Caco-2 (cell line): ENCODE measurements at regions of chr11 and their contacts with region 1.

Region 1: GRCh38 chr11:106276859-106277436 is 199.5 kb downstream of the AASDHPPT start:
- DNase-seq: peak; percentile 48 to 49
- H3K4me3 ChIP-seq: no peak overlapping the region
- H3K4me3 Mint-ChIP-seq: no peak overlapping the region
- H3K27ac Mint-ChIP-seq: peak overlapping the region; percentile 46
- H3K4me1 ChIP-seq: peaks cover 14% of the 10 kb centered on the region; the same call in 1 of the 2 replicates
- H3K4me1 Mint-ChIP-seq: peaks cover 20% of the 10 kb centered on the region
- H3K27me3 ChIP-seq: no peaks in the 10 kb centered on the region
- H3K27me3 Mint-ChIP-seq: no peaks in the 10 kb centered on the region
- CTCF ChIP-seq: peak; percentile 46 to 63

Region 2: DNA sequence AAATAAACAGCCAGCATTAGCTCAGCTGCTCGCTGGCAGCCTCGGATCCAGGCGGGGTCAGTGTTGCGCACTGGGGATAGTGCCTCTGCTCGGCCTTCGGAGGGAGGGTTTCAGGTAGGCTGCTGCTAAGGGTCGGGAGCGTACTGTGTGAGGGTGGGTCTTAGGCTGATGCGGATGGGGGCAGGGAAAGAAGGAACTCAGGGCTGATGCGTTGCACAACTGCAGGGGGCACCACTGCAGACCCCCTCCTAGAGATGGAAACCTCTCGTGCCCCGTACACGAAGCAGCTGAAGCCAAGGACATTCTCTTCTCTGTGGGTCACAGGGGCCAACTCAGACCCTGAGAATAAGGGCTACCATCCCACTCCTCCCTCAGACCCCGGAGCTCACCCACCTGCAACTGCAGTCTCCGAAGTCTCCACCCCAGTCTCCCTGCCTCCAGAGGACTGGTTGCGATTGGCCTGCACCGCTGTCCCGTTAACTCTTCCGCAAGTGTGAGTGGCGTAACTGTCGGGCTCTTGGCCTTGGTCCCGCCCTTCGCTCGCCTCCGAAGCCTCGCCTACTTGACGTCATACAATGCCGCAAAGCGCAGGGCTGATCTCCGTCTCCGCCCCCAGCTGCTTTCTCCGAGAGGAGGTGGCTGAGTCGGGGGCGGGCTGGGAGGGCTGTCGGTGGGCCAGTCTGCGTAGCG is 199.9 kb before region 1 on chr11 and contains the start of gene KBTBD3:
- CTCF ChIA-PET with region 1: no interaction called
- POLR2A ChIA-PET with region 1: no interaction called
- intact Hi-C with region 1: no loop called
- DNase-seq: peak; percentile 100
- H3K4me3 ChIP-seq: peak within 1 kb of the TSS; percentile 99
- H3K4me3 Mint-ChIP-seq: peak within 1 kb of the TSS; percentile 94
- H3K27ac Mint-ChIP-seq: peak within 1 kb of the TSS; percentile 94
- H3K4me1 ChIP-seq: peaks cover 19% of the 10 kb centered on the region
- H3K4me1 Mint-ChIP-seq: peaks cover 18% of the 10 kb centered on the region
- H3K27me3 ChIP-seq: no peaks in the 10 kb centered on the region
- H3K27me3 Mint-ChIP-seq: no peaks in the 10 kb centered on the region
- CTCF ChIP-seq: peak; percentile 34 to 72
- total RNA-seq, gene KBTBD3: 3.2 and 5.6 TPM in 2 replicates

Region 3: DNA sequence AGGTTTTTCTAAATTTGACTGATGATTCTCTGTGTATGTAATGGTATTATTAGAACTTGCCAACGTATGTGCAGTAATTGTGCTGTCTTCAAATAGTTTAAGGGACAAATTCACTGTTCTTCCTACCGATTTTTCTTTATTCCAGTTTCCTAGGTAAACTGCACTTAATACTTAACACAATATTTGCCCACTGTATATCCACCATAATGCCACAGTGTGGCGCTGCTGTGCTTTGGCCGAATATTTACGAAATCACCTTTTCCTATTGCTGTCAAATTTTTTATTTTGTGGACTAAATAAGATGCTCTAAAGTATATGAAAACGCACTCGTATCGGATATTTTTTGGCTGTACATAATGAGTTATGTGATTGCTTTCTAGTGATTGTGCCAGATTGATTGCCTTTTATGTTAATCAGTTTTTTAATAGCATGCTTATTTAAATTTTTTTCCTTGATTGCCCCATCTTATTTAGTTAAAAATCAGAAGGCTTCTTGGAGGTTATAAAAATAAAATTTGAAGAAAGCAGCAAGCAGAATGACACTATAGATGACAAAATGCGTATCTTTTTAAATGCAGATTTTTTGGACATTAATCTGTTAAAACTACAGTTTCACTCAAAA is 189.0 kb before region 1 on chr11:
- CTCF ChIA-PET with region 1: no interaction called
- POLR2A ChIA-PET with region 1: no interaction called
- intact Hi-C with region 1: loop called (anchors 5 kb)
- DNase-seq: peak; percentile 57 to 70
- H3K4me3 ChIP-seq: no peak overlapping the region
- H3K4me3 Mint-ChIP-seq: no peak overlapping the region
- H3K27ac Mint-ChIP-seq: no peak overlapping the region
- H3K4me1 ChIP-seq: peaks cover 6% of the 10 kb centered on the region
- H3K4me1 Mint-ChIP-seq: peaks cover 25% of the 10 kb centered on the region
- H3K27me3 ChIP-seq: no peaks in the 10 kb centered on the region
- H3K27me3 Mint-ChIP-seq: no peaks in the 10 kb centered on the region
- CTCF ChIP-seq: peak; percentile 96 to 99

Region 4: GRCh38 chr11:106552694-106553203 is 275.8 kb after region 1 on chr11:
- CTCF ChIA-PET with region 1: no interaction called
- POLR2A ChIA-PET with region 1: no interaction called
- intact Hi-C with region 1: loop called (anchors 2 kb)
- DNase-seq: no peak
- H3K4me3 ChIP-seq: no peak overlapping the region
- H3K4me3 Mint-ChIP-seq: no peak overlapping the region
- H3K27ac Mint-ChIP-seq: peak overlapping the region; percentile 75
- H3K4me1 ChIP-seq: peaks cover 38% of the 10 kb centered on the region
- H3K4me1 Mint-ChIP-seq: peaks cover 29% of the 10 kb centered on the region
- H3K27me3 ChIP-seq: no peaks in the 10 kb centered on the region
- H3K27me3 Mint-ChIP-seq: no peaks in the 10 kb centered on the region
- CTCF ChIP-seq: no peak

Region 5: DNA sequence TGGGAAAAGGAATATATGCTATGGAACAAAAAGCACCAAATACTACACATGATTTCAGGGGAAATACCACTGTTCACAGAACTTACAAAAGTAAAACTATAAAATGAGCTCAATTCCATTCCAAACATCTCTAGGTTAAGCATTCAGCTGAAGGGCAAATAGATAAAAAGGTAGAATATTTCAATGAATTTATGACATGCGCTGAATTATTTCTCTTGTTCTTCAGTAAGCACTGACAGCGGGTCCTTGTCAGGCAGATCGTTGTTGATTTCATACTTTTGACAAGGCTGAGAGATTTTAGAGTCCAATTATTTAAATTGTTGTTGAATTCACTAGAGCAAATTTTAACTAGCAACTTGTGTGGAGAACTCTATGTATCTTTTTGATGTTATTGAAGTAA is 291.7 kb after region 1 on chr11:
- CTCF ChIA-PET with region 1: no interaction called
- POLR2A ChIA-PET with region 1: no interaction called
- intact Hi-C with region 1: no loop called
- DNase-seq: no peak
- H3K4me3 ChIP-seq: no peak overlapping the region
- H3K4me3 Mint-ChIP-seq: no peak overlapping the region
- H3K27ac Mint-ChIP-seq: no peak overlapping the region
- H3K4me1 ChIP-seq: 0 out of 2 replicates have a peak, but pooled peaks cover 5% of the 10 kb centered on the region
- H3K4me1 Mint-ChIP-seq: peaks cover 7% of the 10 kb centered on the region
- H3K27me3 ChIP-seq: no peaks in the 10 kb centered on the region
- H3K27me3 Mint-ChIP-seq: no peaks in the 10 kb centered on the region
- CTCF ChIP-seq: no peak

Region 6: GRCh38 chr11:106585061-106585460 is 308.1 kb after region 1 on chr11:
- CTCF ChIA-PET with region 1: no interaction called
- POLR2A ChIA-PET with region 1: no interaction called
- intact Hi-C with region 1: loop called (anchors 10 kb)
- DNase-seq: peak; percentile 25 to 40
- H3K4me3 ChIP-seq: no peak overlapping the region
- H3K4me3 Mint-ChIP-seq: no peak overlapping the region
- H3K27ac Mint-ChIP-seq: no peak overlapping the region
- H3K4me1 ChIP-seq: 0 out of 2 replicates have a peak, but pooled peaks cover 3% of the 10 kb centered on the region
- H3K4me1 Mint-ChIP-seq: no peaks in the 10 kb centered on the region
- H3K27me3 ChIP-seq: no peaks in the 10 kb centered on the region
- H3K27me3 Mint-ChIP-seq: no peaks in the 10 kb centered on the region
- CTCF ChIP-seq: no peak

Region 7: GRCh38 chr11:106724293-106724892 is 447.4 kb after region 1 on chr11:
- CTCF ChIA-PET with region 1: no interaction called
- POLR2A ChIA-PET with region 1: no interaction called
- intact Hi-C with region 1: loop called (anchors 1 kb)
- DNase-seq: no peak
- H3K4me3 ChIP-seq: no peak overlapping the region
- H3K4me3 Mint-ChIP-seq: no peak overlapping the region
- H3K27ac Mint-ChIP-seq: no peak overlapping the region
- H3K4me1 ChIP-seq: no peaks in the 10 kb centered on the region
- H3K4me1 Mint-ChIP-seq: peaks cover 14% of the 10 kb centered on the region
- H3K27me3 ChIP-seq: no peaks in the 10 kb centered on the region
- H3K27me3 Mint-ChIP-seq: no peaks in the 10 kb centered on the region
- CTCF ChIP-seq: no peak

Region 8: DNA sequence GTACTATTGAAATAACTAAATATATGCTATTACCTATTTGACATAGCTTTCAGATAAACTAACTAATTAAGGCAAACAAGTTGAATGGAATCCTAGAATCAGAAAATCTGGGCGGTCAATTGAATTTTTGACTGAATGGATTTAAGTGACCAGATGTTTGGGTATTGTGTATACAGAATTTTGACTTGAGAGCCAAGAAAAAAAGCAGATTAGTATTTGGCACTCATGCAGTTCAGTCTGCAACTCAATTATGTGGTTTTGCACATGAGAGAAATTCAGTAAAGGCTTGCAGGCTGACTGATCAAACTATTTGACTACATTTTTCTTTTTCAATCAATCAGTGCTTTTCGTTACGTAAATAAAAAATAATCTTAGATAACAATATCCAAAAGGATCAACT is 486.6 kb after region 1 on chr11:
- CTCF ChIA-PET with region 1: no interaction called
- POLR2A ChIA-PET with region 1: no interaction called
- intact Hi-C with region 1: no loop called
- DNase-seq: no peak
- H3K4me3 ChIP-seq: no peak overlapping the region
- H3K4me3 Mint-ChIP-seq: no peak overlapping the region
- H3K27ac Mint-ChIP-seq: no peak overlapping the region
- H3K4me1 ChIP-seq: peaks cover 3% of the 10 kb centered on the region; the same call in 1 of the 2 replicates
- H3K4me1 Mint-ChIP-seq: peaks cover 5% of the 10 kb centered on the region
- H3K27me3 ChIP-seq: no peaks in the 10 kb centered on the region
- H3K27me3 Mint-ChIP-seq: no peaks in the 10 kb centered on the region
- CTCF ChIP-seq: no peak